Ascending aorta (tissue), 2 donors: ENCODE measurements at regions of chr2 and their contacts with region 1.

Region 1: DNA sequence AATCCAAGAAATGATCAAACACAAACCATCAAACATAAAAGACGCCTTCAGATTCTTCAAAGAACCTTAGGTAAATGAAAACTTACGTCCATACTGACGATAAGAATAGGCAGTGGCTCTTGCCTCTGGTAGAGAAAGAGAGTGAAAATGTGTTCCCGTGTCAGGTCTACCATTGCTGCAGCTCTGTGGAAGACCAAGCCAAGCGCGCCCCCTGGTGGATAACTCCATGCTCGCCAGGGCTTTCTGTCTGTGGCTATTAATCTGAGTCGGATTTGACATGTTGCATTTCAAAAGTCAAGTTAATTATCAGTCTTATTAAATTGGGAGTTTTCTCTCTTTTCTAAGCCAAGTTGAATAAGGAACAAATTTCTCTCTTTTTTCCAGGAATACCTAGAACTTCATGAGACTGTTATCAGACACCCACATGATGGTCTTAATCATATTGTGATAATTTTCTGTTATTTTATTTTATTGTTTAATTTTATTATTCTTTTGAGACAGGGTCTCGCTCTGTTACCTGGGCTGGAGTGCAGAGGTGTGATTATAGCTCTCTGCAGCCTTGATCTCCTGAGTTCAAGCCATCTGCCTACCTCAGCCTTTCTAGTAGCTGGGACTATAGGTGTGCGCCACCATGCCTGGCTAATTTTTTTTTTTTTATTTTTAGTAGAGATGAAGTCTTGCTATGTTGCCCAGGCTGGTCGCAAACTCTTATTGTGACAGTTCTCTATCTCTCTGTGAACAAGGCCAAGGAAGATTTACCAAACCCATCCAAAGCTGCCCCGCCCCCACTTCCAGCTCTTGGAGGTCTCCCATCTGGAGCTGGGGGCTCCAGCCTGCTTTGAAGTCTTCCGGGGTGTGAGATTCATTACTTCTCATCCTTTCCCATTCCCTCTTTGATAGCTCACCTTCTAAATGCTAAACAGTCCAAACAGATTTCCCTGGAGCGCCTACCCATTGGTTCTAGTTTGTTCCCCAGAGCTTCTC is 15.8 kb upstream of the ZAP70 start:
- DNase-seq: peak; percentile 28 to 95
- H3K4me3 ChIP-seq: no peak overlapping the region
- H3K27ac ChIP-seq: no peak overlapping the region
- H3K4me1 ChIP-seq: peaks cover 0 to 2% of the 10 kb centered on the region in 2 donors
- H3K27me3 ChIP-seq: no peaks in the 10 kb centered on the region
- CTCF ChIP-seq: peak; percentile 82 to 92 (median 91)

Region 2: GRCh38 chr2:98385050-98385699 is 687.6 kb after region 1 on chr2:
- intact Hi-C with region 1: loop called (anchors 10 kb)
- DNase-seq: peak in 1 of 2 donors; percentile 78
- H3K4me3 ChIP-seq: no peak overlapping the region
- H3K27ac ChIP-seq: no peak overlapping the region
- H3K4me1 ChIP-seq: no peaks in the 10 kb centered on the region
- H3K27me3 ChIP-seq: no peaks in the 10 kb centered on the region
- CTCF ChIP-seq: peak; percentile 86 to 92 (median 90)